Calu3 (cell line): ENCODE measurements at regions of chr13 and their contacts with region 1.

Region 1: GRCh38 chr13:52127783-52128702 is 830 bp downstream of the NEK5 start:
- DNase-seq: peak; percentile 67
- H3K4me3 Mint-ChIP-seq: peak overlapping the region; percentile 82
- H3K27ac Mint-ChIP-seq: no peak overlapping the region
- H3K4me1 Mint-ChIP-seq: no peaks in the 10 kb centered on the region
- H3K27me3 Mint-ChIP-seq: no peaks in the 10 kb centered on the region
- CTCF ChIP-seq: peak; percentile 41

Region 2: GRCh38 chr13:51814825-51815650 is 313.0 kb before region 1 on chr13:
- CTCF ChIA-PET with region 1: interaction called, 6 read pairs
- intact Hi-C with region 1: loop called (anchors 2 kb)
- DNase-seq: peak; percentile 66
- H3K4me3 Mint-ChIP-seq: peak overlapping the region; percentile 55
- H3K27ac Mint-ChIP-seq: no peak overlapping the region
- H3K4me1 Mint-ChIP-seq: no peaks in the 10 kb centered on the region
- H3K27me3 Mint-ChIP-seq: peaks cover 41% of the 10 kb centered on the region
- CTCF ChIP-seq: peak; percentile 62

Region 3: GRCh38 chr13:52001120-52001731 is 126.8 kb before region 1 on chr13:
- CTCF ChIA-PET with region 1: interaction called, 6 read pairs
- intact Hi-C with region 1: loop called (anchors 2 kb)
- DNase-seq: no peak
- H3K4me3 Mint-ChIP-seq: no peak overlapping the region
- H3K27ac Mint-ChIP-seq: no peak overlapping the region
- H3K4me1 Mint-ChIP-seq: peaks cover 37% of the 10 kb centered on the region
- H3K27me3 Mint-ChIP-seq: peaks cover 36% of the 10 kb centered on the region
- CTCF ChIP-seq: peak; percentile 39